Activated CD4-positive, alpha-beta memory T cell treated with anti-CD3 and anti-CD28 coated beads for 36 hours (primary cell): ENCODE measurements at regions of chr16 and their contacts with region 1.

Region 1: DNA sequence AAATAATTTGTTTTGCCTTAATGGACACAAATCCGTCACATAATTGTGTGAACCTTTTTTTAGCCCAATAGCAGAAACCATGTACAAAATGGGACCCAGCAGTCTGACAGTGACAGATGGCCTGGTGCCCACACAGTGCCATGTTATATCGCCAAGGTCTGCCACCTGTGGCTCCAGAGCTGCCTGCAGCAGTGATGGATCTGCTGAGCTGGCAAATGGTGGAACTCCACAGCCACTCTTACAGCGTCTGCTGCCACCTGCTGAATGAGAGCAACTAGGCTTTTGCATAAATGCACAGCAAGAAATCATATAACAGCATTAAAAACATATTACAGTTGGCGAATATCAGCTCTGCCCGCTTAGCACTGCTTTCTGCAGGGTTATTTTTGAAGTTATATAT is 59.4 kb downstream of the NUP93 start:
- DNase-seq: peak; percentile 40
- H3K4me3 Mint-ChIP-seq: no peak overlapping the region
- H3K27ac Mint-ChIP-seq: no peak overlapping the region
- H3K4me1 Mint-ChIP-seq: peaks cover under 1% of the 10 kb centered on the region
- H3K27me3 Mint-ChIP-seq: no peaks in the 10 kb centered on the region

Region 2: DNA sequence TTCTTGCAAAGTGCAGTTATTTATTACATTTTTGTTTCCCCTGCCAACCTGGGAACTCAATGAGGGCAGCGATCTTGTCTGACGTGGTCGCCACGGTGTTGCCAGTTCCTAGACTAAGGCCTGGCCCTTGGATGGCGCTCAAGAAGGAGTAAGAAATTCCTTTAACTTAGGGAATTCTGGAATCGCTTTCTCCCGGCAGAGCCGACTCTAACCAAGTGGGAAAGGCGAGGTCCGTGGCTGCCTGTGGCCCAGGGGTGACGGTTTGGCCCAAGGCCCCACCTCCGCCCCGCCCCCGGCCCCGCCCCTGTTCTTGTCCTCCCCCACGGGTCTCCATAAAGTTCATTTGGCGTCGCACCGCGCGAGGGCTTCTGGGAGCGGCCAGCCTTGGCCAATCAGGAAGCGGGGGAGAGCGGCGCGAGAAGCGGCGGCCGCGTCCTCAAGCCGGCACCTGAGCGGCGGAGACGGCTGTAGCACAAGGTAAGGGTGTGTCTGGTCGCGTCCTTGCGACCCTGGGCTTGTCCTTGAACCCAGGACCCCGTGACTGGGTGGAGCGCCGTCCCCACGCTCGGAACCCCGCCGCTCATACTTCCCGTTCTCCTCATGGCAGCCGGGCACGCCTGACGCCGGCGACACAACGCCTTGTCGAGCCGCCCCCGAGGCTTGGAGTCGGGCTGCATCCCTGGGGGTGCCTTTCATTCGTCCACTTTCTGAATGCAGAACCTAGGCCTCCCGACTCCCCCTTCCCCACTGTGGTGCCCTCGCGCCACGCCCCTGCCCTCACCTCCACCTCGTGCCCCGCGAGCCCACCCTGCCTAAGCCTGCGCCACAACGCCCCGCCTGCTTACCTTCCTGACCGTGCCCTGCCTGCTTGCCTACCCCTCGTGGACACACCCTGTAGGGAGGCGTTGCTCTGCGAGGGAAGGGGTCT is 59.4 kb before region 1 on chr16 and contains the start of gene NUP93:
- CTCF ChIA-PET with region 1: interaction called, 5 read pairs
- POLR2A ChIA-PET with region 1: interaction called, 3 read pairs
- intact Hi-C with region 1: loop called (anchors 10 kb)
- DNase-seq: peak; percentile 94
- H3K4me3 Mint-ChIP-seq: peak within 1 kb of the TSS; percentile 88
- H3K27ac Mint-ChIP-seq: peak within 1 kb of the TSS; percentile 51
- H3K4me1 Mint-ChIP-seq: peaks cover 16% of the 10 kb centered on the region
- H3K27me3 Mint-ChIP-seq: no peaks in the 10 kb centered on the region
- total RNA-seq, gene NUP93: 131 to 133 TPM